ENCODE measurements at regions of chr13 and their contacts with region 1.

Region 1: DNA sequence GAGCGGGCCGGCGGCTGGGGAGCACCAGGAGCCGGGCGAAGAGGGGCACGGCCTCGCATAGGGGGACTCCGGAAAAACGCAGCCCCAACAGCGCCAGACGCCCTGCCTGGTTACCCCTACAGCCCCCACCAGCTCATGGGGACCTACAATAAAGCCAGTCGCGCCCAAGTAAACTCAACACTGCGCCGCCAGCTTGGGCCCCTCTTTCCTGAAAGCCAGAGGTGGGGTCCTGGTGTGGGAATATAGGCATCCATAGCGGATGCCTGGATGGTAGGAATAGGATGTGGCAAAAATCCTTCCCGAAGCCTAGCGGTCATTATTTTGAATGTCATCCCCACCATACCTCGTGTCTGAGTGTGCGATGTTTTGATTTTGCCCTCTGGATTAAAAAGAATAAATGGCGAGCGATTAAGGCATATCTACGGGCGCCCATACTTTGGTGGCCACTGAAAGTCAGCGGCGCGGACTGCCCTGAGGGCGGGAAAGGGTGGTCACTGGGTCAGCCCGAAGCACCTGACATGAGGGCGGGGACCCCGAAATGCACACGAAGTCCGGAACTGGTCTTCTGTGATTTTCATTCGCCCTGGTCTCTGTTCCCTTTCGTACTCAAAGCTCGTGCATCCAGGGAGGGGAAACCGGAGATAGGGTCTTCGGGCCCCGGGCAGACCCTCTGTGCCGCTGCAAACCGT is at the starts of genes NHLRC3 and PROSER1:
- DNase-seq: peak; percentile 63
- ATAC-seq: peak; percentile 85
- H3K4me3 ChIP-seq: peak within 1 kb of the TSS; percentile 95
- H3K27ac ChIP-seq: peak within 1 kb of the TSS; percentile 93
- H3K4me1 ChIP-seq: peaks cover 5% of the 10 kb centered on the region
- H3K27me3 ChIP-seq: no peaks in the 10 kb centered on the region
- CTCF ChIP-seq: no peak
- EP300 ChIP-seq: no peak
- POLR2A ChIP-seq: peak; percentile 81
- RAD21 ChIP-seq: no peak
- polyA plus RNA-seq, gene NHLRC3: 8.3 to 11.8 TPM
- polyA plus RNA-seq, gene PROSER1: 19.6 to 20.8 TPM

Region 2: DNA sequence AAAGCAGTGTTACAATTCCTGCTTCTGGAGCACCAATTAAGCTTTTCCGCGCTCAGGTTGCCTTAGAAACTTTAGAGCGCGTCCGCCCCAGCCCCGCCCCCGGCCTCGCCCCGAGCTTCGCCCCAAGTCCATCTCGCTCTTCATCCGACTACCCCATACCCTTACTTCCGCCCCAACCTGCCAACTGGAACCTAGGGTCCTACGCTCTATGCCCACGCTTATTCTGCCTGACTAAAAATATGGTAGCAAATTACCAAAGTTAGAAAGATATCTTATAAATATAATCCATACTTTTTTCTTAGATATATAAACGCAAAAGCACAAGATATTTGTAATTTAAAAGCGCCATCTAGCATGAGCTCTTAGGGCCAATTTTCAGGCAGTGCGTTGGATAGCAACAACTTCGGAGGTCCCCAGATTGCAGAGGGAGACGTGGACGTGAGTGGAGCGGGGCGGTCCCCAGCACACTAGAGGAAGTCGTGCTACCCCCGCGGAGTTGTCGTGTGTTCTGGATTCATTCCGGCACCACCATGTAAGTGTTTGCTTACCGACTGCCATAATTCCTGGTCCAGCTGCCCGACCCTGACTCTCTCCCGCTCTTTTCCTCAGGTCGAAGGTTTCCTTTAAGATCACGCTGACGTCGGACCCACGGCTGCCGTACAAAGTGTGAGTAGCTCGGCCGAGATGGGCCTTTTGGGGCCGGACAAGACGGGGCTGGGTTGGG is 688.5 kb before region 1 on chr13 and contains the start of gene UFM1:
- CTCF ChIA-PET with region 1: no interaction called
- POLR2A ChIA-PET with region 1: no interaction called
- RAD21 ChIA-PET with region 1: no interaction called
- SMC1A ChIA-PET with region 1: no interaction called
- in situ Hi-C with region 1: no loop called
- intact Hi-C with region 1: loop called (anchors 10 kb)
- DNase-seq: peak; percentile 86
- ATAC-seq: peak; percentile 96
- H3K4me3 ChIP-seq: peak within 1 kb of the TSS; percentile 89
- H3K27ac ChIP-seq: peak within 1 kb of the TSS; percentile 95
- H3K4me1 ChIP-seq: peaks cover 7% of the 10 kb centered on the region; the same call in 1 of the 2 replicates
- H3K27me3 ChIP-seq: no peaks in the 10 kb centered on the region
- CTCF ChIP-seq: no peak
- EP300 ChIP-seq: no peak
- POLR2A ChIP-seq: peak; percentile 97
- RAD21 ChIP-seq: no peak
- polyA plus RNA-seq, gene UFM1: 91.9 to 96.5 TPM

Region 3: GRCh38 chr13:39016787-39017186 is 21.2 kb before region 1 on chr13:
- CTCF ChIA-PET with region 1: interaction called, 13 read pairs
- POLR2A ChIA-PET with region 1: interaction called, 8 read pairs
- RAD21 ChIA-PET with region 1: interaction called, 12 read pairs
- SMC1A ChIA-PET with region 1: interaction called, 8 read pairs
- in situ Hi-C with region 1: no loop called
- intact Hi-C with region 1: no loop called
- DNase-seq: no peak
- ATAC-seq: peak; percentile 86
- H3K4me3 ChIP-seq: no peak overlapping the region
- H3K27ac ChIP-seq: peak overlapping the region; percentile 20; the same call in 1 of the 2 replicates
- H3K4me1 ChIP-seq: no peaks in the 10 kb centered on the region
- H3K27me3 ChIP-seq: no peaks in the 10 kb centered on the region
- CTCF ChIP-seq: peak; percentile 61 to 66 (median 65)
- EP300 ChIP-seq: no peak
- POLR2A ChIP-seq: no peak
- RAD21 ChIP-seq: peak; percentile 52